ENCODE measurements at regions of chr12 and their contacts with region 1.

Region 1: GRCh38 chr12:3885277-3886094 is 12.3 kb upstream of the PARP11 start:
- DNase-seq: peak in 4 of 5 donors; percentile 21 to 64 (median 52)
- H3K4me3 ChIP-seq: no peak overlapping the region
- H3K4me3 Mint-ChIP-seq: no peak overlapping the region
- H3K27ac ChIP-seq: no peak overlapping the region
- H3K27ac Mint-ChIP-seq: peak overlapping the region in 5 of 8 donors; percentile 2 to 75 (median 27)
- H3K4me1 ChIP-seq: no peaks in the 10 kb centered on the region
- H3K4me1 Mint-ChIP-seq: peaks cover 4 to 7% (median 6%) of the 10 kb centered on the region in 3 donors
- H3K27me3 ChIP-seq: no peaks in the 10 kb centered on the region
- H3K27me3 Mint-ChIP-seq: peaks cover 2 to 6% of the 10 kb centered on the region in 2 donors

Region 2: DNA sequence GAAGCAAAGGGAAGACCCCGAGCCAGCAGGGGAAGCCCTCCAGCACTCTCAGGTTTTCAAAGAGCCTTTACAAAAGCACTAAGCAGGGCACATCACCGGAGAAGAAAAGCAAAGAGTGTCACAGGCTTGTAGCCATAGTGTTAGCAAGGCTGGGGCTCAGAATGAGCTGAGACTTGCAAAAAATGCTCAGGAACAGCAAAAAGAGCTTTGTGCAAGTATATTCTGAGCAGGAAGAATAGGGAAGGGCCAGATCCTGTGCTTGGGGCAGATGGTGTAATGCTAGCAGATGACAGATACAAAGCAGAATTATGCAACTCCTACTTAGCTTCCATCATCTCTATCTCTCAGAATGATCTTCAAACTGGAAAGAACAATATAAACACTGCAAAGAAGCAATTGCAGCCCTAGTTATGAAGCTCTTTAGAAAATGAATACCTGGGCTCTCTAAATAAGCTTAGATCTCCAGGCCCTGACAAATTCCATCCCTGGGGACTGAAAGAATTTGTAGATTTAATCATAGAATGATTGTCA is 11.4 kb after region 1 on chr12:
- CTCF ChIA-PET with region 1: interaction called, 28 read pairs
- POLR2A ChIA-PET with region 1: no interaction called
- DNase-seq: no peak
- H3K4me3 ChIP-seq: peak overlapping the region; percentile 0
- H3K4me3 Mint-ChIP-seq: peak overlapping the region; percentile 24 to 77 (median 75)
- H3K27ac ChIP-seq: no peak overlapping the region
- H3K27ac Mint-ChIP-seq: peak overlapping the region; percentile 31 to 96 (median 94)
- H3K4me1 ChIP-seq: peaks cover 79% of the 10 kb centered on the region
- H3K4me1 Mint-ChIP-seq: peaks cover 27 to 41% (median 28%) of the 10 kb centered on the region in 3 donors
- H3K27me3 ChIP-seq: no peaks in the 10 kb centered on the region
- H3K27me3 Mint-ChIP-seq: no peaks in the 10 kb centered on the region

Region 3: DNA sequence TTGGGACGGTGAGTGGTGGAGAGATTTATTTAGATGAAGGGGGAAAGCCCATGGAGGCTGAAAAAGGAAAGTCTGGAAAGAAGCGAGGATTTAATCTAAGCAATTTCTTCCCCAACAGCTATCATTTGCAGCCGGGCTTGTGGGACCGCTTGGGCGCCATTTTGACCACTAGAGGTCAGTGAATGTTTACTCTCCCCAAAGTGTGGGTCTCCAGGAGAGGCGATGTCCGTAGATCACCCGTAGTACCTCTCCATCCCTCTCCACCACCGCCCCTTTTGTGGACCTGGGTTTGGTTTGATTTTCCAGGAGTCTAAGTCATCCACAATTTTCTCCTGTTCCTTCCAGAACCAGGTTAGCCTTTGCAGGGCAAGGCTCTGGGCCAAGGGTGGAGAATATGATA is 79.0 kb after region 1 on chr12:
- CTCF ChIA-PET with region 1: interaction called, 67 read pairs
- POLR2A ChIA-PET with region 1: interaction called, 3 read pairs
- DNase-seq: no peak
- H3K4me3 ChIP-seq: no peak overlapping the region
- H3K4me3 Mint-ChIP-seq: no peak overlapping the region
- H3K27ac ChIP-seq: no peak overlapping the region
- H3K27ac Mint-ChIP-seq: peak overlapping the region in 2 of 8 donors; percentile 19 to 69
- H3K4me1 ChIP-seq: peaks cover 20% of the 10 kb centered on the region
- H3K4me1 Mint-ChIP-seq: peaks cover 15 to 24% (median 19%) of the 10 kb centered on the region in 3 donors
- H3K27me3 ChIP-seq: no peaks in the 10 kb centered on the region
- H3K27me3 Mint-ChIP-seq: peaks cover 9 to 11% of the 10 kb centered on the region in 2 donors

Region 4: GRCh38 chr12:3988519-3989448 is 103.3 kb after region 1 on chr12:
- CTCF ChIA-PET with region 1: interaction called, 55 read pairs
- POLR2A ChIA-PET with region 1: no interaction called
- DNase-seq: peak in 1 of 5 donors; percentile 57
- H3K4me3 ChIP-seq: peak overlapping the region; percentile 10
- H3K4me3 Mint-ChIP-seq: peak overlapping the region in 6 of 7 donors; percentile 21 to 72 (median 32)
- H3K27ac ChIP-seq: no peak overlapping the region
- H3K27ac Mint-ChIP-seq: peak overlapping the region; percentile 53 to 90 (median 72)
- H3K4me1 ChIP-seq: peaks cover 20% of the 10 kb centered on the region
- H3K4me1 Mint-ChIP-seq: peaks cover 16 to 26% (median 18%) of the 10 kb centered on the region in 3 donors
- H3K27me3 ChIP-seq: no peaks in the 10 kb centered on the region
- H3K27me3 Mint-ChIP-seq: peaks cover 0 to 3% of the 10 kb centered on the region in 2 donors

Region 5: GRCh38 chr12:4269279-4269991 is 383.9 kb after region 1 on chr12:
- CTCF ChIA-PET with region 1: interaction called, 14 read pairs
- POLR2A ChIA-PET with region 1: interaction called, 3 read pairs
- DNase-seq: peak; percentile 87 to 95 (median 92)
- H3K4me3 ChIP-seq: peak overlapping the region; percentile 95
- H3K4me3 Mint-ChIP-seq: peak overlapping the region; percentile 93 to 100 (median 99)
- H3K27ac ChIP-seq: peak overlapping the region; percentile 83
- H3K27ac Mint-ChIP-seq: peak overlapping the region; percentile 93 to 100 (median 100)
- H3K4me1 ChIP-seq: peaks cover 12% of the 10 kb centered on the region
- H3K4me1 Mint-ChIP-seq: peaks cover 18 to 37% (median 22%) of the 10 kb centered on the region in 3 donors
- H3K27me3 ChIP-seq: peaks cover 3% of the 10 kb centered on the region
- H3K27me3 Mint-ChIP-seq: peaks cover 4 to 10% of the 10 kb centered on the region in 2 donors

Measured in CD8-positive, alpha-beta memory T cell (primary cell).